ENCODE measurements at regions of chr15 and their contacts with region 1.

Region 1: DNA sequence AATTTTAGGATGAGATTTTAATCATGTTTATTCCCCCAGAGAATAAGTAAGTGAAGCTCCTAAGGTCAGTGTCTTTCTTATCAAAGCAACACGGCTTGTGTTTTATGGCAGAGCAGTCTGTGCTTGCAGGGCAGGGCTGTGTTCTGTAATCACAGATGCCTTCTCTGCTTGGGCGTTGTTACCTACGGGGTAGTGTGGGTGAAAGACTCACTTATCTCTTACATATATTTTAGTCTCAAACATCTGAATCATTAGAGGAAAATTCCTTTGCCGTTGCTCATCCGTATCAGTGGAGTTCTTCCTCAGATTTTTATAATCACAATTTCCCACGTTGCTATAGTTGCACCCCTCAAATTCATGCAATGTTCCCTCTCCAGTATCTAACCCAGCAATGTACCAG is 271.7 kb upstream of the MEIS2 start:
- DNase-seq: no peak
- H3K4me3 ChIP-seq: no peak overlapping the region
- H3K27ac ChIP-seq: no peak overlapping the region
- H3K4me1 ChIP-seq: no peaks in the 10 kb centered on the region
- H3K27me3 ChIP-seq: no peaks in the 10 kb centered on the region
- CTCF ChIP-seq: no peak
- POLR2A ChIP-seq: no peak

Region 2: DNA sequence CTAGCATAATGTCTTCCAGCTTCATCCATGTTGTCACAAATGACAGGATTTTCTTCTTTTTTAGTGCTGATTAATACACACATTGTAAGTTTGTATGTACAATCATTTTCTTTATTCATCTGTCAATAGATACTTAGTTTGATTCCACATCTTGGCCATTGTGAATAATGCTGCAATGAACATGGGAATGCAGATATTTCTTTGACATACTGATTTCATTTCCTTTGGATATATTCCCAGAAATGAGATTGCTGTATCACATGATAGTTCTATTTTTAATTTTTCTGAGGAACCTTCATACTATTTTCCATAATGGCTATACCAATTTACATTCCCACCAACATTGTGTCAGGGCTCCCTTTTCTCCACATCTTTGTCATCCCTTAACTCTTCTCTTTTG is 389.6 kb before region 1 on chr15:
- intact Hi-C with region 1: loop called (anchors 10 kb)
- DNase-seq: no peak
- H3K4me3 ChIP-seq: no peak overlapping the region
- H3K27ac ChIP-seq: no peak overlapping the region
- H3K4me1 ChIP-seq: no peaks in the 10 kb centered on the region
- H3K27me3 ChIP-seq: no peaks in the 10 kb centered on the region
- CTCF ChIP-seq: no peak
- POLR2A ChIP-seq: no peak

Region 3: DNA sequence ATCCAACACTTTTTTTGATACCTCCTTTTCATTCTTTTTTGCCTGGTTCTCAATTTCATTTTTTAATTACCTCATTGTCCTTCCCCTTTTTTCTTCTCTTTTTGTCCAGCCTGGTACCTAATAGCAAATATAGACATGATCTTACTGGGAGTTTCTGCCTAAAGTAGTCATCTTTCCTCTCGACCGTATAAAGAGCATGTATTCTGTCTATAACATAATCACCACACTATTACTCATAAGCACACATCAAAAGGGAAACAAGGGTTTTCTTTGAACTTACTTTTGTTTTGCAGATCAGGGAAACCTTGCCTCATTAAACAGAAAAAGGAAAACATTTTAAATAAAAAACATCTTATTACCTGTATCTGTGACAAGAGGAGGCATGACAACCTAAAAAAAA is 1114.9 kb after region 1 on chr15:
- intact Hi-C with region 1: no loop called
- DNase-seq: no peak
- H3K4me3 ChIP-seq: no peak overlapping the region
- H3K27ac ChIP-seq: no peak overlapping the region
- H3K4me1 ChIP-seq: no peaks in the 10 kb centered on the region
- H3K27me3 ChIP-seq: no peaks in the 10 kb centered on the region
- CTCF ChIP-seq: no peak
- POLR2A ChIP-seq: no peak

Measured in breast epithelium (tissue), 4 donors.